ENCODE measurements at regions of chr1 and their contacts with region 1.

Region 1: GRCh38 chr1:6794164-6794563 is 8.9 kb downstream of the CAMTA1 start:
- DNase-seq: peak; percentile 8
- H3K4me3 ChIP-seq: no peak overlapping the region
- H3K27ac ChIP-seq: no peak overlapping the region
- H3K4me1 ChIP-seq: no peaks in the 10 kb centered on the region
- H3K27me3 ChIP-seq: no peaks in the 10 kb centered on the region
- CTCF ChIP-seq: peak; percentile 23 to 25

Region 2: GRCh38 chr1:6727535-6727934 is 66.6 kb before region 1 on chr1:
- CTCF ChIA-PET with region 1: no interaction called
- dilution Hi-C with region 1: no loop called
- in situ Hi-C with region 1: no loop called
- intact Hi-C with region 1: no loop called
- DNase-seq: peak; percentile 34
- H3K4me3 ChIP-seq: no peak overlapping the region
- H3K27ac ChIP-seq: no peak overlapping the region
- H3K4me1 ChIP-seq: peaks cover 11% of the 10 kb centered on the region
- H3K27me3 ChIP-seq: no peaks in the 10 kb centered on the region
- CTCF ChIP-seq: peak; percentile 91 to 95

Region 3: GRCh38 chr1:6770751-6771440 is 23.3 kb before region 1 on chr1:
- CTCF ChIA-PET with region 1: no interaction called
- dilution Hi-C with region 1: no loop called
- in situ Hi-C with region 1: no loop called
- intact Hi-C with region 1: no loop called
- DNase-seq: peak; percentile 75
- H3K4me3 ChIP-seq: no peak overlapping the region
- H3K27ac ChIP-seq: no peak overlapping the region
- H3K4me1 ChIP-seq: peaks cover 9% of the 10 kb centered on the region
- H3K27me3 ChIP-seq: no peaks in the 10 kb centered on the region
- CTCF ChIP-seq: no peak

Region 4: DNA sequence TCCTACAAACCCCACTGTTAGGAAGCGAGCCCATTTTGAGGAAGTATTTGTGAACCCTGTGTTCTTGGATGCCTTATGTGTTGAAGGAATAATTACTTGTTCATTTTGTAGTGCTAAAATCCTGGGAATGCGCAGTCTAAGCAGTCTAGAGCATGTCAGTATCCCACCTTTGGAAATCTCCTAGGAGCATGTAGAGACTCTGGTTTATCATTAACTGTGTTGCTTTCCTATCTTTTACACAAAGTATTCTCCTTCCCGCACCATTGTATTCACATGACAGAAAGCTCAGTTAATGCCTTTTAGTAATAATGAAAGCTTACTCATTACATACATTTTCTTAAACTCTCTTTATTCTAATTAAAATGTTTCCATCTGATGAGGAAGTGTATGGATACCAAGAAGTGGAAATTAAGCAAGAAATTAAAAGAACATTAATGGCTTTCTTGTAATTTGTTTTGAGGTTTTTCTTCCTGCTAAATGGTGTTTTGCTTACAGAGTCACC is 90.5 kb after region 1 on chr1:
- CTCF ChIA-PET with region 1: no interaction called
- dilution Hi-C with region 1: no loop called
- in situ Hi-C with region 1: no loop called
- intact Hi-C with region 1: no loop called
- DNase-seq: no peak
- H3K4me3 ChIP-seq: no peak overlapping the region
- H3K27ac ChIP-seq: no peak overlapping the region
- H3K4me1 ChIP-seq: peaks cover 13% of the 10 kb centered on the region
- H3K27me3 ChIP-seq: no peaks in the 10 kb centered on the region
- CTCF ChIP-seq: no peak

Region 5: DNA sequence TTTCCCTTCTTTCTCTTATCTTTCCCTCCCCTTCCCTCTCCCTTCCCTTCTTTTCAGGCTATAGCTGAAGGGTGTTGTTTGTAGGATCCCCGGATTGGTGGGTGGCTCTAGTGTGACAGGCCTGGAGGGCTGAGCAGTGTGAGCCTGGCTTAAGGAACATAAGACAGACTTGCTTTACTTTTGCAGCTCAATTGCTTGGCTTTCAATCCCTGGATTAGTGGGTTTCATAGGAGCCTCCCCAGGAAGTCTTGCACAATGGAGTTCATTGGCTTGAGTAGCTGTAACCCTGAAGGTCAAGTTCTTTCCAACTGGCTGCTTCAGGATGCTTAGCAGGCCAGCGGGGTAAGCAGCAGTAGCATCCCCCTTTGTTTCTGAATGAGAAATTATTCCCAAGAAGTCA is 117.8 kb after region 1 on chr1:
- CTCF ChIA-PET with region 1: no interaction called
- dilution Hi-C with region 1: no loop called
- in situ Hi-C with region 1: no loop called
- intact Hi-C with region 1: no loop called
- DNase-seq: no peak
- H3K4me3 ChIP-seq: no peak overlapping the region
- H3K27ac ChIP-seq: no peak overlapping the region
- H3K4me1 ChIP-seq: peaks cover 2% of the 10 kb centered on the region
- H3K27me3 ChIP-seq: no peaks in the 10 kb centered on the region
- CTCF ChIP-seq: no peak

Region 6: GRCh38 chr1:7207875-7208646 is 413.9 kb after region 1 on chr1:
- CTCF ChIA-PET with region 1: no interaction called
- dilution Hi-C with region 1: no loop called
- in situ Hi-C with region 1: loop called (anchors 10 kb)
- intact Hi-C with region 1: loop called (anchors 2 kb)
- DNase-seq: peak; percentile 64
- H3K4me3 ChIP-seq: no peak overlapping the region
- H3K27ac ChIP-seq: no peak overlapping the region
- H3K4me1 ChIP-seq: no peaks in the 10 kb centered on the region
- H3K27me3 ChIP-seq: no peaks in the 10 kb centered on the region
- CTCF ChIP-seq: peak; percentile 99

Region 7: DNA sequence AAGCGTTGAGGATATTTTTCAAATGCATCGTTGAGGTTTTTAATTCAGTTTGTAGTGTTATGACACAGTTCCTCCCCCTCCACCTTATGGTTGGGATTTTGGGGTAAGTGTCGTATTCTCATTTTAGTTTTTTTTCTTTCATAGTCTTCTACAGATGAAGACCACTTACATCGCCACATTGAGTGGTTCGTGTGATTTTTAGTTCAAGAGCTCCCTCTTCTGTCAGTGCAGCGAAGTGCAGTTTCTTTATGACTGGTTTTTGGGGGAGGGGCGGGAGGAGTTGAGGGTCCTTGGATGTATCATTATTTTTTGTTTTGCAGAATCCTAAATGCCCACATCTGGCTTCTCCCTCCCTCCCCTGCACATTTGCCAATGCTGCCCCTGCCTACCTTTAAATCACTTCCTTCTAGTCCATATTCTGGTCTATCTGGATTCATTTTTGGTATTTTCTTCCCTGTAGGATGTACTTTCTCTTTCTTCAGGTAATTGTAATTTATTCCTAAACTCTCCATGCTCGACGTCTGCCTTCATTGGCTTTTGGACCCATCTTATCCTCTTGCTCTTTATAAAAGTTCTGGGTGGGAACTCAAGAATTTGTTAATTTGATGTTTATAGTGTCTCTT is 424.2 kb after region 1 on chr1:
- CTCF ChIA-PET with region 1: no interaction called
- dilution Hi-C with region 1: no loop called
- in situ Hi-C with region 1: loop called (anchors 10 kb)
- intact Hi-C with region 1: no loop called
- DNase-seq: peak; percentile 14
- H3K4me3 ChIP-seq: no peak overlapping the region
- H3K27ac ChIP-seq: no peak overlapping the region
- H3K4me1 ChIP-seq: no peaks in the 10 kb centered on the region
- H3K27me3 ChIP-seq: no peaks in the 10 kb centered on the region
- CTCF ChIP-seq: peak; percentile 78 to 83